HepG2 (cell line): ENCODE measurements at regions of chr3 and their contacts with region 1.

Region 1: DNA sequence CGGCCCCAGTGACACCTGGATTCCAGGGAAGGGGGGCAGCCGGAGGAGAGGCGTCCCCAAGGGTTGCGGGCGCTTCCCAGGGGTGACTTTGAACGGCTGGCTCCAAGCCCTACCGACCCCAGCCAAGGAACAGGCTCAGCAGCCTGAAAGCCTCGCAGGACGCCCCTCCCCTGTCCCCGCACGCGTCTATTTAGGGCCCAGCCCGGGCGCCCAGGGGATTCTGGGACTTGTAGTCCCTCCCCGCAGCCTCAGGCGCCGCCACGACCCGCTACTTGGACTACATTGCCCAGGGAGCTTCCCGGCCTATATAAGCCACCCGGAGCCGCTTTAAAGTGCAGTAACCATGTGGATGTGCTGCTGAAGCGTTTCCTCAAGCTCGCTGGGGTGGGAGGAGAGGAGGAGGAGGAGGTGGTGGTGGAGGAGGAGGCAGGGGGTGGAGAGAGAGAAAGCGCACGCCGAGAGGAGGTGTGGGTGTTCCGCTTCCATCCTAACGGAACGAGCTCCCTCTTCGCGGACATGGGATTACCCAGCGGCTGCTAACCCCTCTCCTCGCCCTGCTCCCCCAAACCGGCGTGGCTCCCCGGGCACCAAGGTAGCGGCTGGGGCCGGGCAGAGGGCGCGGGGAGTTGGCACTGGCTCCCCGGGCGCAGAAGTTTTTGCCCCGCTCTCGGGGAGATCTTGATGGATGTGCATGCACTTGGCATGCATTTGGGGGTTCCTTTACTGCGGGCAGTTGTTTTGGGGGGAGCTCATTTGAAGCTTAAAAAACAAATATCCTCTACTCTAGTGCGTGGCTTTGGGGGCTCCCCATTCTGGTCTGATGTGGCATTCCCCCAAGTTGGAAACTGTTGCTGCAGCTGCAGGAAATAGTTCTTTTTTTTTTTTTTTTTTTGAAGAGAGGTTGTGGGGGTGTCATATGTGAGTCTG is at the start of gene ITPR1:
- DNase-seq: peak; percentile 98
- ATAC-seq: peak; percentile 97
- H3K4me3 ChIP-seq: peak within 1 kb of the TSS; percentile 87 to 93 (median 92)
- H3K27ac ChIP-seq: peak within 1 kb of the TSS; percentile 80
- H3K4me1 ChIP-seq: peaks cover 55% of the 10 kb centered on the region
- H3K27me3 ChIP-seq: no peaks in the 10 kb centered on the region; a peak in 1 of 5 replicates
- CTCF ChIP-seq: peak; percentile 35
- EP300 ChIP-seq: peak; percentile 8 to 40; a peak in 1 of 4 replicates
- POLR2A ChIP-seq: peak; percentile 99 to 100
- RAD21 ChIP-seq: peak; percentile 36; the same call in 1 of the 2 replicates
- total RNA-seq, gene ITPR1: 10.1 and 11.4 TPM in 2 replicates

Region 2: GRCh38 chr3:4030624-4031023 is 462.7 kb before region 1 on chr3:
- CTCF ChIA-PET with region 1: no interaction called
- POLR2A ChIA-PET with region 1: no interaction called
- in situ Hi-C with region 1: no loop called
- intact Hi-C with region 1: no loop called
- DNase-seq: no peak
- ATAC-seq: no peak
- H3K4me3 ChIP-seq: no peak overlapping the region
- H3K27ac ChIP-seq: no peak overlapping the region
- H3K4me1 ChIP-seq: no peaks in the 10 kb centered on the region
- H3K27me3 ChIP-seq: no peaks in the 10 kb centered on the region
- CTCF ChIP-seq: no peak
- EP300 ChIP-seq: no peak
- POLR2A ChIP-seq: no peak
- RAD21 ChIP-seq: no peak

Region 3: GRCh38 chr3:4461468-4462090 is 31.7 kb before region 1 on chr3:
- CTCF ChIA-PET with region 1: no interaction called
- POLR2A ChIA-PET with region 1: interaction called, 49 read pairs
- in situ Hi-C with region 1: no loop called
- intact Hi-C with region 1: loop called (anchors 2 kb)
- DNase-seq: no peak
- ATAC-seq: no peak
- H3K4me3 ChIP-seq: no peak overlapping the region
- H3K27ac ChIP-seq: no peak overlapping the region
- H3K4me1 ChIP-seq: peaks cover 38% of the 10 kb centered on the region
- H3K27me3 ChIP-seq: no peaks in the 10 kb centered on the region; a peak in 1 of 5 replicates
- CTCF ChIP-seq: no peak
- EP300 ChIP-seq: no peak
- POLR2A ChIP-seq: no peak
- RAD21 ChIP-seq: no peak

Region 4: GRCh38 chr3:4474683-4475490 is 18.4 kb before region 1 on chr3:
- CTCF ChIA-PET with region 1: no interaction called
- POLR2A ChIA-PET with region 1: interaction called, 20 read pairs
- in situ Hi-C with region 1: no loop called
- intact Hi-C with region 1: no loop called
- DNase-seq: no peak
- ATAC-seq: peak; percentile 71
- H3K4me3 ChIP-seq: peak overlapping the region; percentile 11 to 41 (median 25); a peak in 5 of 6 replicates
- H3K27ac ChIP-seq: no peak overlapping the region
- H3K4me1 ChIP-seq: peaks cover 12% of the 10 kb centered on the region; the same call in 1 of the 2 replicates
- H3K27me3 ChIP-seq: peaks cover 4 to 14% of the 10 kb centered on the region in 2 experiments; a peak in 4 of 5 replicates
- CTCF ChIP-seq: no peak
- EP300 ChIP-seq: no peak
- POLR2A ChIP-seq: no peak
- RAD21 ChIP-seq: no peak

Region 5: GRCh38 chr3:4533489-4534443 is 40.5 kb after region 1 on chr3:
- CTCF ChIA-PET with region 1: no interaction called
- POLR2A ChIA-PET with region 1: interaction called, 18 read pairs
- in situ Hi-C with region 1: no loop called
- intact Hi-C with region 1: no loop called
- DNase-seq: peak; percentile 48
- ATAC-seq: peak; percentile 87
- H3K4me3 ChIP-seq: peak overlapping the region; percentile 33 to 52 (median 49)
- H3K27ac ChIP-seq: peak overlapping the region; percentile 72
- H3K4me1 ChIP-seq: peaks cover 33% of the 10 kb centered on the region
- H3K27me3 ChIP-seq: no peaks in the 10 kb centered on the region
- CTCF ChIP-seq: 0 out of 2 replicates have a peak, but pooled peaks have one; percentile 11
- EP300 ChIP-seq: peak in 1 of 2 experiments; percentile 27; a peak in 1 of 4 replicates
- POLR2A ChIP-seq: no peak
- RAD21 ChIP-seq: no peak

Region 6: GRCh38 chr3:4571690-4572334 is 78.5 kb after region 1 on chr3:
- CTCF ChIA-PET with region 1: no interaction called
- POLR2A ChIA-PET with region 1: interaction called, 50 read pairs
- in situ Hi-C with region 1: loop called (anchors 5 kb)
- intact Hi-C with region 1: loop called (anchors 1 kb)
- DNase-seq: peak; percentile 69
- ATAC-seq: peak; percentile 96
- H3K4me3 ChIP-seq: 0 out of 6 replicates have a peak overlapping the region, but pooled peaks of 1 of the 3 experiments have one; percentile 29
- H3K27ac ChIP-seq: peak overlapping the region; percentile 73
- H3K4me1 ChIP-seq: peaks cover 33% of the 10 kb centered on the region
- H3K27me3 ChIP-seq: no peaks in the 10 kb centered on the region
- CTCF ChIP-seq: peak; percentile 74
- EP300 ChIP-seq: no peak
- POLR2A ChIP-seq: no peak
- RAD21 ChIP-seq: peak; percentile 71